Naive thymus-derived CD4-positive, alpha-beta T cell (primary cell): ENCODE measurements at regions of chr20 and their contacts with region 1.

Region 1: GRCh38 chr20:23889775-23890211 is 10.2 kb upstream of the CST5 start:
- DNase-seq: peak; percentile 49 to 79 (median 67)
- ATAC-seq: peak; percentile 94
- H3K4me3 ChIP-seq: no peak overlapping the region
- H3K4me3 Mint-ChIP-seq: no peak overlapping the region
- H3K27ac ChIP-seq: no peak overlapping the region
- H3K27ac Mint-ChIP-seq: no peak overlapping the region
- H3K4me1 ChIP-seq: no peaks in the 10 kb centered on the region
- H3K4me1 Mint-ChIP-seq: peaks cover 0 to 4% (median 0%) of the 10 kb centered on the region in 7 donors
- H3K27me3 ChIP-seq: no peaks in the 10 kb centered on the region
- H3K27me3 Mint-ChIP-seq: peaks cover 3 to 17% (median 10%) of the 10 kb centered on the region in 5 donors

Region 2: DNA sequence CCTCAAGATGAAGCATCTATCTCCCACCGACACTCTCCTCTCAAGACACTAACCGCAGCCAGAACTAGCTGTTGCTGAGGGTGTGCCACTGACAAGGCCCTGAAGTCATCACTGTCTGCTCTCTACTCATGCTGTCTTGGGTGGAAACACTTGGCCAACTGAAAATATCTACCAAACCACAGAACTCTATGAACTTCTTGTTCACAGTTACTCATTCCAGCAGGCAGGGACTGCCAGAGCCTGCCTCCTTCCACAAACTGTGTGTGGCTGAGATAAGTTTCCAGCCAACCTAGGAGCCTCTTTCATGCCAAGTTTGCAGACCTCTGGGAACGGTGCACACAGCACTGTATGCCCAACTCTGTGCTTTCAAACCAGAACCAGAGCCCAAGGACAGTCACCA is 584.7 kb before region 1 on chr20:
- CTCF ChIA-PET with region 1: no interaction called
- POLR2A ChIA-PET with region 1: no interaction called
- intact Hi-C with region 1: no loop called
- DNase-seq: no peak
- ATAC-seq: no peak
- H3K4me3 ChIP-seq: no peak overlapping the region
- H3K4me3 Mint-ChIP-seq: no peak overlapping the region
- H3K27ac ChIP-seq: no peak overlapping the region
- H3K27ac Mint-ChIP-seq: no peak overlapping the region
- H3K4me1 ChIP-seq: no peaks in the 10 kb centered on the region
- H3K4me1 Mint-ChIP-seq: peaks cover 0 to 1% (median 0%) of the 10 kb centered on the region in 7 donors
- H3K27me3 ChIP-seq: no peaks in the 10 kb centered on the region
- H3K27me3 Mint-ChIP-seq: peaks cover 0 to 6% (median 0%) of the 10 kb centered on the region in 5 donors

Region 3: GRCh38 chr20:23800878-23801277 is 88.9 kb before region 1 on chr20:
- CTCF ChIA-PET with region 1: no interaction called
- POLR2A ChIA-PET with region 1: no interaction called
- intact Hi-C with region 1: no loop called
- DNase-seq: no peak
- ATAC-seq: no peak
- H3K4me3 ChIP-seq: no peak overlapping the region
- H3K4me3 Mint-ChIP-seq: no peak overlapping the region
- H3K27ac ChIP-seq: no peak overlapping the region
- H3K27ac Mint-ChIP-seq: no peak overlapping the region
- H3K4me1 ChIP-seq: no peaks in the 10 kb centered on the region
- H3K4me1 Mint-ChIP-seq: no peaks in the 10 kb centered on the region
- H3K27me3 ChIP-seq: no peaks in the 10 kb centered on the region
- H3K27me3 Mint-ChIP-seq: peaks cover 0 to 16% (median 13%) of the 10 kb centered on the region in 5 donors

Region 4: DNA sequence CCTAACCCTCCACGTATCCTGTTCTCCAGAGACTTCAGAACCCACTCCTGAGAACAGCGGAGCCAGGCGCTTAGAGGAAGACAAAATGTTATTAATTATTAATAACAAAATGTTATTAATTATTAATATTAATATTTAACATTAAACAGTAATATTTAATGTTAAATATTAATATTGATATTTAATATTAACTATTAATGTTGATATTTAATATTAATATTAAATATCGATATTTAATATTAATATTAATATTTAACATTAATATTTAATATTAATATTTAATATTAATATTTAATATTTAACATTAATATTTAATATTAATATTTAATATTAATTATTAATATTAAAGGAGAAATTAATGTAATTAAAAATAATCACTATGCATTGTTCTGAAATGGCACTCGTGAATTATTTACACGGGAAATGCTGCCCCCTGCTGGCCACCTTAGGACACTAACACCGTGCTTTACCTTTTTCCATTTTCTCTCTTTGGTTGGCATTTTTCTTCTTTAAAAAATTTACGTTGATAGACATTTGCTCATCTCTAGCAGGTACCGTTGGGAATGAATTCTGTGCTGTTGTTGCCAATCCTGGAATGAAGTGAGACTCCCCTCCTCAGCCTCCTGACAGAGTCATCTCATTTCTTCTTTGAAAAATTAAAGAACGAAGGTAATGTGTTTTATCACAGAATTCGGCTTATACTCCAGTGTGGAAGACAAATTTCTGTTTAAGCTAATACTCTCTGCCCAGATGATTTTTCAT is 106.3 kb after region 1 on chr20:
- CTCF ChIA-PET with region 1: no interaction called
- POLR2A ChIA-PET with region 1: no interaction called
- intact Hi-C with region 1: loop called in 1 of 2 experiments (anchors 5 kb)
- DNase-seq: peak in 7 of 9 donors; percentile 20 to 61 (median 48)
- ATAC-seq: peak; percentile 57
- H3K4me3 ChIP-seq: no peak overlapping the region
- H3K4me3 Mint-ChIP-seq: peak overlapping the region in 1 of 10 donors; percentile 24
- H3K27ac ChIP-seq: no peak overlapping the region
- H3K27ac Mint-ChIP-seq: peak overlapping the region in 2 of 9 donors; percentile 1 to 9
- H3K4me1 ChIP-seq: no peaks in the 10 kb centered on the region
- H3K4me1 Mint-ChIP-seq: peaks cover 0 to 16% (median 5%) of the 10 kb centered on the region in 7 donors
- H3K27me3 ChIP-seq: no peaks in the 10 kb centered on the region
- H3K27me3 Mint-ChIP-seq: peaks cover 0 to 34% (median 0%) of the 10 kb centered on the region in 5 donors

Region 5: DNA sequence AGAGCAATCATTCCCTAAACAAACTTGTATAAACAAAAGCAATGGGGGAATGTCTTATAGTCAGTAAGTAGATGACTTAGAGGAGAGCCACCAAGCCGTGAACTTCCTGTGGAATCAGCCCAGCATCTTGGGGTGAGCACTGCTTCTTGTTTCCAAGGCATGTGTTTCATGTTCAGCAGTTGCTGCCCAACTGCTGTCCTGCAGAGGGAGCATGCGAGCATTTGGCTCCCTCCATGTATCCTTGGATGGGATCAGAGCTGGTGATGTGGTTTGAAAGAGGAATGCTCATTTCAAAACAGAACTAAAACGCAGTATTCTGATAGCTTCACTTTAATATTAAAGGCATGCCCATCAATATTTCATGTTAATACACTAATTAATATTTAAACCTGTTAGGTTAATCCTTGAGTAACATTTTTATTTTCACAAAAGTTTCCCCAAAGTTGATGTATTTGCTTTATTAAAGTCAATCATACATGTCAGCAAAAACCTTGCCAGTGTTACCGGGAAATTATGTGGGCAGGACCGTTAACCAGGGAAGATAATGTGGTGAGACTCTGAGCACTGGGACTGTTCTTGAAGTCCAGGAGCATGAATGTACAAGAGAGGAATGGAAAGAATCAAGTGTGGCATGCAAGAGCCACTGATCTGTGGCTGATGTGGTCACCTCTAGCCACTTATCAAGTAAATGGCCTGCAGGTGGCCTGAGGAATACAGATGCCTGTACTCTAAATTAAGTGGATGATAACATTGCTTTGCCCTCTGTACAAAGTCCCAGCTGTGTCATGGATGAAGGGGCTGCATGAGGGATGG is 271.0 kb after region 1 on chr20:
- CTCF ChIA-PET with region 1: no interaction called
- POLR2A ChIA-PET with region 1: no interaction called
- intact Hi-C with region 1: loop called (anchors 1 to 5 kb)
- DNase-seq: peak in 2 of 9 donors; percentile 4 to 16
- ATAC-seq: no peak
- H3K4me3 ChIP-seq: no peak overlapping the region
- H3K4me3 Mint-ChIP-seq: no peak overlapping the region
- H3K27ac ChIP-seq: no peak overlapping the region
- H3K27ac Mint-ChIP-seq: peak overlapping the region in 1 of 9 donors; percentile 23
- H3K4me1 ChIP-seq: no peaks in the 10 kb centered on the region
- H3K4me1 Mint-ChIP-seq: peaks cover 0 to 6% (median 4%) of the 10 kb centered on the region in 7 donors
- H3K27me3 ChIP-seq: no peaks in the 10 kb centered on the region
- H3K27me3 Mint-ChIP-seq: peaks cover 0 to 2% (median 0%) of the 10 kb centered on the region in 5 donors